ENCODE measurements at regions of chr11 and their contacts with region 1.

Region 1: DNA sequence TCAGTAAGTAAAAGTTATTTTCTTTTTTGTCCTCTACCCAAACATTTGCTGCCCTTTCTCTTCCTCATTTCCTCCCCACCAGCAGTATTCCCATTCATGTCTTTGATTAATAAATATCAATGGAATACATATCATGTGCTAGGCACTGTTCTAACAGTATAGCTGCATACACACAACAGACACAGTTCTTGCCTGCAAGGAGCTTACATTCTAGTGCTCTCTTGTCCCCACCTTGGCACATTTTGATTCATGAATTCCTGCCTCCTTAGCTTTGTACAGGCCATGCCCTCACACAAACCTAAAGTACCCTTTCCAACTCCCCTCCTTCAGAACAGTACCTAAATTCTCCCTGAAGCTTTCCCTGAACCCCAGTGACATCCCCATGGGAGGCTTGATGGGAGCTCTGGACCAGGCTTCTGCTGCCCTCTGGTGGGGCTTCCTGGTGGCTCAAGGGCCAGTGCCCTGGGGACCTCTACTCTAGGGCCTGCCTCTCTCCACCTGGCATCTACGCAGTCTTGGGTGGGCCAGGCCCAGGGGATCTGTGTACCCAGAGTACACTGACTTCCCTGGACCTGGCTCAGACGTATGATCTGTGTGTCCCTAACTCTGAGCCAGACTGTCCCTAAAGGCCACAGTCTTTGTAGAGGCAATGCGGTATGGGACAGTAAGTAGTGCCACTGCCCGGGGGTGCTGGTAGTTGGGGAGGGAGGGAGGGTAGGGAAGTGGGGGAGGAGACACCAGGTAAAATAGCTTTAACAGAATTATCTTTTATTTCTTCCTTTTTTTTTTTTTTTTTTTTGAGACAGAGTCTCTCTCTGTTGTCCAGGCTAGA is 14.1 kb downstream of the RPS13 start:
- DNase-seq: peak; percentile 42 to 74
- ATAC-seq: peak; percentile 75 to 94 (median 86)
- H3K4me3 ChIP-seq: no peak overlapping the region
- H3K27ac ChIP-seq: no peak overlapping the region
- H3K4me1 ChIP-seq: no peaks in the 10 kb centered on the region
- H3K27me3 ChIP-seq: no peaks in the 10 kb centered on the region
- CTCF ChIP-seq: peak; percentile 79

Region 2: DNA sequence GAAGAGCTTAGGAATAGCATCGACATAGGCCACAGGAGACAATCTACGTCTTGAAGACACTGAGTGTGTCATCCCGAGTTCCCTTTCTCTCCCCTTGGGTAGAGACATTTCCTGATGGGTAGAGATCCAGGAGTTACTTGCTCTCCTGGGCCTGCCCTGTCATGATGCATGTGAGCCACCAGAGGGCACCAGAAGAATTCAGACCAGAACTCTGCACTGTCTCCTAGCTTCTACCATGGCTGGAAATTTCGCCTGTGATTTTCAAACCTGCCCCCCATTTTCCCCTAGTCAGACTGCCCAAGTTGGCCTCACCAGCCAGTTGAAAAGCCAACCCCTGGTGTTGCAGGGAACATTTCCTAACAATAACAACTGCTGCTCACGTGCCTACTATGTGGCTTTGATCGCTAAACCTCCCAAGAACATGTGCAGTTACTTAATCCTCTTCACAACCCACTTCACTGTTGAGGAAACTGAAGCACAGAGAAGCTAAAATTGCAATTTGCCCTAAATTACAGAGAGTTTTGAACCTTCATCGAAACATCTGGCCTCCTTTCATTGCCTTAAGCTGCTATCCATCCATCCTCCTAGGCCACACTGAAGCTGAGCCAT is 277.8 kb before region 1 on chr11:
- intact Hi-C with region 1: loop called (anchors 5 to 10 kb)
- DNase-seq: peak in 1 of 2 donors; percentile 59
- ATAC-seq: peak; percentile 71 to 88 (median 81)
- H3K4me3 ChIP-seq: no peak overlapping the region
- H3K27ac ChIP-seq: no peak overlapping the region
- H3K4me1 ChIP-seq: peaks cover 8% of the 10 kb centered on the region
- H3K27me3 ChIP-seq: no peaks in the 10 kb centered on the region
- CTCF ChIP-seq: peak; percentile 92

Region 3: DNA sequence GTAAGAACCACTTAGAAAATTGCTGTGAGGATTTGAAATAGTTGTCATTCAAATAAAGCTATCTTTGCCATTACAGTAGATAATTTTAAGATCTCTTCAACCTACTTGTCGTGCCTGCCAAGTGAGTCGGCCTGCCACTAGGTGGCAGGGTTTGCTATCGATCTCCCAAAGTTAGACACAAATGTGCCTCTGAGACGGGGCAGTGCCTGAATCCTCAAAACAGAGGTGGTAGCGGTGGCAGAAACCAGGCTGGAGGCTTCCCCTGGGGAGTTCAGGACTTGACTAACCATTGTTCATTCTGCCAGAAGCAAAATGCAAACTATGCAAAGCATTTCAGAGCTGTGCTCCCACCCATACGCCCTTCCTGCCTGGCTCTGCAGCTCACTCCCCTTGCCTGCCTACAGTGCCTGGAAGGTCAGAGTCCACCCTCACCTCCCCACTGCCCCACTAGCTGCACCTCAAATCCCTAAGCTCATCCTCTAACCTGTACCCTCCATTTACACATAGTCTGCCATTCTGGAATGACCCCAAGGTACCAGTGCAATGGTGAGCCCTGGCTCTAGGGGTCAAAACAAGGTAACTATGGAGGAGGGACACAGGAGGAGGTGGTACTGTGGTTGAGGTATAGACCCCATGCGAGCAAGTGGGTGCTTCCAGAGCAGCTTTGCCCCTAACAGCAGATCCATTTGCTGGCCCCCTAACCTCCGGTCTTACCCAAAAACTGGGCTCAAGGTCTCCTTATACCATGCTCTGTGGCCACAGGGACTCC is 242.9 kb before region 1 on chr11:
- intact Hi-C with region 1: loop called (anchors 5 to 10 kb)
- DNase-seq: peak; percentile 75 to 86
- ATAC-seq: peak; percentile 74 to 90 (median 82)
- H3K4me3 ChIP-seq: no peak overlapping the region
- H3K27ac ChIP-seq: no peak overlapping the region
- H3K4me1 ChIP-seq: peaks cover 8% of the 10 kb centered on the region
- H3K27me3 ChIP-seq: no peaks in the 10 kb centered on the region
- CTCF ChIP-seq: peak; percentile 88

Region 4: DNA sequence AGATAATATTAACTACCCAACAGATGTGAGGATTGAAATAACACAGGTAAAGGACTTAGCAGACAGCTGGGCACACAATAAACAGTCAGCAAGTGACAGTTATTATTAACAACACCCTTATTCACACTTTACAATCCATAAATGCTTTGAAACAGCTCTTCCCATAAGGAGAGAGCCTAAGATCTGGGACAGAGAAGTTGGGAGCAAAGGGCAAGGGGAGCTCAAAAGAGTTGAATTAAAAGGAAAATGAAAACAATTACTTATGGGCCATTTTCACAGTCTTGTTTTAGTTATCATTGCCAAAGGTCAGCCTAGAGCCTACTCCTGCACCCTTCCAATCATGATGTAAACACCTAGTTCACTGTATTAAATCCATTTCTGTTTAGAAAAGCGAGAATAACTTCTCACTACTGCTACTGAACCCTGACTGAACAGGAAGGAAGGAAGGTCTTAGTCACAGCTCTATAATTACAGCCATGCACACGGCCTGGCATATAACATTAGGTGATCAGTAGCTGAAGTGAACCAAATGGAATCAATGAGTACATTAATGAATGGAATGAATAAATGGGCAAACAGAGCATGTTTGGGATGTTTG is 160.5 kb before region 1 on chr11:
- intact Hi-C with region 1: no loop called
- DNase-seq: no peak
- ATAC-seq: no peak
- H3K4me3 ChIP-seq: no peak overlapping the region
- H3K27ac ChIP-seq: no peak overlapping the region
- H3K4me1 ChIP-seq: no peaks in the 10 kb centered on the region
- H3K27me3 ChIP-seq: no peaks in the 10 kb centered on the region
- CTCF ChIP-seq: no peak

Region 5: GRCh38 chr11:16945671-16946469 is 117.5 kb before region 1 on chr11:
- intact Hi-C with region 1: loop called (anchors 1 to 5 kb)
- DNase-seq: no peak
- ATAC-seq: peak; percentile 76 to 89 (median 82)
- H3K4me3 ChIP-seq: no peak overlapping the region
- H3K27ac ChIP-seq: no peak overlapping the region
- H3K4me1 ChIP-seq: no peaks in the 10 kb centered on the region
- H3K27me3 ChIP-seq: no peaks in the 10 kb centered on the region
- CTCF ChIP-seq: peak; percentile 77

Region 6: DNA sequence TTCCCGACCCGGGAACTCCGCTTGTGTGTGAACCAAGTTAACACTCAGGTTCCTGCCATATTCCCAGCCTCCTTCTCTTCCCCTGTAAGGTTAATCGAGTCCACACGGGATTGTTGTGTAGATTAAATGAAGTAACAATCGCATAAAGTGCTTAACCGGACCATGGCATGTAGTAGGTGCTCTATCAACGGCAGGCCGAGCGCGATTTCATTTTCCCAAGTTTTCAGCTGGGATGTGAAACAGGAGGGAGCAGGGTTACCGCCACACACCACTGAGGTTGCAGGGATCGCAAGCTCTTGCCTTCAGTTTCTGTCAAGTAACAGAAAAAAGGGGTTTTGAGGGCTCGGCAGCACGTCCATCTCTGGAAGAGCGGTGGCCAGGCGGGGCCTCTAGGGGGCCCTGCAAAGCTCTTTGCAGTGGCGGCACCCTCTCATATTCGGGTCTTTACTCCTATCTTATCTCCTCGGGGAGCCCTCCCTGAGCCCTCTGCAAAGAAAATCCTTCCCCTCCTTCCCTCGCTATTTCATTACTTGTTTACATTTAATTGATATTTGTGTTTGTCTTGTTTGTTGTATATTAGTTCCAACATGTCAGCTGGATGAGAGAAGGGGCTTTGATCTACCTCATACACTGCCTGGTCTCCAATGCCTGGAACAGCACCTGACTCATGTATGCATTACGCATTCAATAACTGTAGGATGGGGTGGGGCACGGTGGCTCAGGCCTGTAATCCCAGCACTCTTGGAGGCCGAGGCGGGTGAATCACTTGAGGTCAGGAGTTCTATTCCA is 48.4 kb before region 1 on chr11:
- intact Hi-C with region 1: loop called in 1 of 2 experiments (anchors 5 kb)
- DNase-seq: no peak
- ATAC-seq: peak in 1 of 4 donors; percentile 29
- H3K4me3 ChIP-seq: peak overlapping the region; percentile 78
- H3K27ac ChIP-seq: no peak overlapping the region
- H3K4me1 ChIP-seq: no peaks in the 10 kb centered on the region
- H3K27me3 ChIP-seq: peaks cover 0 to 34% (median 5%) of the 10 kb centered on the region in 3 donors
- CTCF ChIP-seq: peak; percentile 29

Measured in psoas muscle (tissue), 8 donors.